Activated T-helper 2 cell treated with anti-CD3 and anti-CD28 coated beads, Interferon-gamma antibody, Interleukin-2, Interleukin-4, amounts not matched to agents 10 μg/mL and 5 μg/mL and 100 μg/mL, durations not matched to agents 14 hours and 24 hours and 36 hours (primary cell): ENCODE measurements at regions of chr9 and their contacts with region 1.

Region 1: GRCh38 chr9:87812375-87813118 is 70.1 kb upstream of the SPATA31E1 start:
- DNase-seq: no peak
- H3K4me3 Mint-ChIP-seq: no peak overlapping the region
- H3K27ac Mint-ChIP-seq: peak overlapping the region; percentile 52
- H3K4me1 Mint-ChIP-seq: peaks cover 32% of the 10 kb centered on the region
- H3K27me3 Mint-ChIP-seq: peaks cover 7% of the 10 kb centered on the region

Region 2: DNA sequence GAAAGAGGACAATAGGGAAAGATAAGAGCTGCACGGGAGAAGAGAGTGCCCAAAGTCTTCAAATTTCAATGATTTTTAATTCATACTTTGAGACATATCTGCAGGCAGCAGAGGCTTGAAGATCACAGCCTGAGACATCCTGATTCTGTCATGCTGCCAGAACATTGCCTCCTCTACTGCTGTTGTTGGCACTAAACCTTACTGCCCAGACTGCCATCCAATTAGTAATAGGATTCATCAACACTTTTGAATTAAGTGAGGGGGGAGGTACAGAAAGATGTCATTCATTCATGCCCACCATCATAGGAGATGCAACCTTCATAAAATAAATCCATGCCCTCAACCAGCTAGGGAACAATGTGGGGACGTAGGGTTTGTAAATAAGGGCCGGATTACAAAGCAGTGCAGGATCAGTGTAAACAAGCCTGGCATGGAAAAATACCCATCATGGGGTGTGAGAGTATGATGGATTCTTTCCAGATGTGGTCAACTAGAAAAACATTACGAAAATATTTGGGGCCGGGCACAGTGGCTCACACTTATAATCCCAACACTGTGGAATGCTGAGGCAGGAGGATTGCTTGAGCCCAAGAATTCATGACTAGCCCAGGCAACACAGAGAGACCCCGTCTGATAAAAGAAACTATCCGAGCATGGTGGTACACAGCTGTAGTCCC is 437.0 kb before region 1 on chr9:
- intact Hi-C with region 1: loop called (anchors 1 kb)
- DNase-seq: no peak
- H3K4me3 Mint-ChIP-seq: no peak overlapping the region
- H3K27ac Mint-ChIP-seq: no peak overlapping the region
- H3K4me1 Mint-ChIP-seq: peaks cover 11% of the 10 kb centered on the region
- H3K27me3 Mint-ChIP-seq: peaks cover 10% of the 10 kb centered on the region

Region 3: DNA sequence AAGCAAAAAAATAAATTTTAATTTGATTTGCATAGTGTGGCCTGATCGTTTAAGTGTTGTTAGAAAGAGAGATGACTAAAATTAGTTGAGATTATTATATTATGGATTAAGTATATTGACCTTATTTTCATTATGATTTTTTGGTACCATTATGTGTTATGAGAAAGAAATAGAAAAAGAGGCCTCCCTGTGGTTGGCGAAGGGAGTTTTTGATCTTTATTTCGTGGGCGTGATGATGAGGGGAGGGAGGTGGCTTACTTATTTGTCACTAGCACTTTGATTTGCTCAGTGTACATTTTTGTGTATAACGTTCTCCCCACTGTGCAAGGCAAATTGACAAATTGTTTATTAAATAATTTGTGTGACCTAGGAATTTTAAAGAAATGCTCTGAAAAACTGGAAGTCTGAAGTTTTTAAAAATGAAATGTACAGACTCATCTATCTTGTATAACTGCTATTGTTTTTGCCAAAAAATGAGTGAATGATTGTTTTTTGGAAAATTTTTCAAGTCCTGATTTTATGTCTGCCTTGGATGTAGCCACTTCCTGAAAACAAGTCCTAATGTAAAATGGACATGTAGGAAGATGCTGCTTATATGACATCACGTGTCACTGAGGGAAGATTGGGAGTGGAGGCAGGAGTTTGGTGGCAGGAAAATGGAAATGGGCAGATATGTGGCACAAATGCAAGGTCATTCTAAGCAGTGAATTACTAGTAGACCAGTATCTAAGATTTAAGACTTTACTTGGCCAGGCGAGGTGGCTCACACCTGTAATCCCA is 311.9 kb before region 1 on chr9:
- intact Hi-C with region 1: loop called (anchors 1 kb)
- DNase-seq: no peak
- H3K4me3 Mint-ChIP-seq: peak overlapping the region; percentile 86
- H3K27ac Mint-ChIP-seq: peak overlapping the region; percentile 45
- H3K4me1 Mint-ChIP-seq: peaks cover 48% of the 10 kb centered on the region
- H3K27me3 Mint-ChIP-seq: peaks cover 23% of the 10 kb centered on the region

Region 4: GRCh38 chr9:87707805-87708506 is 104.6 kb before region 1 on chr9:
- intact Hi-C with region 1: loop called (anchors 1 kb)
- DNase-seq: no peak
- H3K4me3 Mint-ChIP-seq: no peak overlapping the region
- H3K27ac Mint-ChIP-seq: no peak overlapping the region
- H3K4me1 Mint-ChIP-seq: peaks cover 26% of the 10 kb centered on the region
- H3K27me3 Mint-ChIP-seq: peaks cover 13% of the 10 kb centered on the region

Region 5: DNA sequence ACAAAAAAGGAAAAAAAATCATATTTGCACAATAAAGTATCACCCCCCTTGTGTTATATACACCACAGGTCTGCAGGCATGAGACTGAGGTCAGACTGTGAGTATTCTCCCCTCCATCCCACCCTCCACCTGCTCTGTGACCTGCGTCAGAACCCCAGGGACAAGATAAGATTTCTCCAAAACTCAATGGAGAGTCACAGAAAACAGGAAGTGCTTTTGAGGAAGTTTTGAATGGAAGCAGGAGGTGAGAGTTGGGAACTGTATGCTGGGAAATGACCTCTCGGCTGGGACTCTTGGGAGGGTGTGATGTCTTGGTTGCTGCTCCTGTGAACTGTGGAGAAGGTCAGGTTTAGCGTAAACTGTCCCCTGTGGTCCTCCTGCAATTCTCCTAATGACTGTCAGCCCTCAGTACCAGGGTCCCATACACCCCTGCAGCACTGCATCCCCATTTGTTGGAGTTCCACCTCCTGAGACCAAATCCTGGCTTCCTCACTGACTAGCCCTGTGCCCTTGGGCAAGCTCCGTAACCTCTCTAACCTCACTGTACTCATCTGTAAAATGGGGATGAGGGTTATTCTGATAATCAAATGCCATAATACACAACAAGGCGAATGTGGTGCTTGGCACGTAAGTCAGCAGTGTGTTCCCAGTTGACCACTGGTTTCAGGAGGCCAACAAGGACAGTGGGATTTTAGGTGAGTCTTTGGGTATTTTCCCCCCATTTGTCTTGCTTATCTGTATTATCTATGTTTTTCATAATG is 93.5 kb before region 1 on chr9:
- intact Hi-C with region 1: no loop called
- DNase-seq: no peak
- H3K4me3 Mint-ChIP-seq: no peak overlapping the region
- H3K27ac Mint-ChIP-seq: no peak overlapping the region
- H3K4me1 Mint-ChIP-seq: peaks cover 3% of the 10 kb centered on the region
- H3K27me3 Mint-ChIP-seq: peaks cover 34% of the 10 kb centered on the region

Region 6: DNA sequence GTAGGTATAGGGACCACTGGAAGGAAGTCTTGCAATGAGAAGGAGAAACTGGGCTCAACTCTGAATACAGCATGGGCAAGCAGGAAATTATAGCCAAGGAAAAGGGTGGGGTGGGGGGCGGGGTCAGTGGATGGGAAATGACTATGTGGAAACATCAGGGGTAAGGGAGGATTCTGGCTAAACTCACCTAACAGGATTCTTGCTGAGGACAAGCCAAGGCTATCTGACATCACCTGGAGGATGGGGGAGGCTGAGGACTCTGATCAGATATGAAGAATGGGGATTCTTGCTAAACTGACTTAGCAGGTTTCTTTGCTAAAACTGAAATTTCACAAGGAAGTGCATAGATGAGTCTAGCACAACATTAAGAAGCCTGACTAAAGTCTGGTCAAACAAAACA is 45.8 kb before region 1 on chr9:
- intact Hi-C with region 1: loop called (anchors 1 kb)
- DNase-seq: no peak
- H3K4me3 Mint-ChIP-seq: no peak overlapping the region
- H3K27ac Mint-ChIP-seq: peak overlapping the region; percentile 28
- H3K4me1 Mint-ChIP-seq: peaks cover 8% of the 10 kb centered on the region
- H3K27me3 Mint-ChIP-seq: peaks cover 12% of the 10 kb centered on the region